Heart left ventricle (tissue), 16 donors: ENCODE measurements at regions of chr7 and their contacts with region 1.

Region 1: GRCh38 chr7:83976295-83976694 is 218.3 kb downstream of the SEMA3A start:
- DNase-seq: no peak
- ATAC-seq: peak in 1 of 4 donors; percentile 50
- H3K4me3 ChIP-seq: no peak overlapping the region
- H3K27ac ChIP-seq: no peak overlapping the region
- H3K4me1 ChIP-seq: no peaks in the 10 kb centered on the region
- H3K27me3 ChIP-seq: no peaks in the 10 kb centered on the region
- CTCF ChIP-seq: peak; percentile 46 to 84 (median 68)
- POLR2A ChIP-seq: no peak

Region 2: GRCh38 chr7:84100866-84101265 is 124.6 kb after region 1 on chr7:
- intact Hi-C with region 1: no loop called
- DNase-seq: no peak
- ATAC-seq: no peak
- H3K4me3 ChIP-seq: no peak overlapping the region
- H3K27ac ChIP-seq: no peak overlapping the region
- H3K4me1 ChIP-seq: no peaks in the 10 kb centered on the region
- H3K27me3 ChIP-seq: no peaks in the 10 kb centered on the region
- CTCF ChIP-seq: no peak
- POLR2A ChIP-seq: no peak

Region 3: GRCh38 chr7:84188786-84189405 is 212.6 kb after region 1 on chr7:
- intact Hi-C with region 1: loop called in 9 of 10 experiments (anchors 2 to 10 kb)
- DNase-seq: no peak
- ATAC-seq: peak in 2 of 4 donors; percentile 47 to 60
- H3K4me3 ChIP-seq: no peak overlapping the region
- H3K27ac ChIP-seq: no peak overlapping the region
- H3K4me1 ChIP-seq: peaks cover 0 to 7% (median 0%) of the 10 kb centered on the region in 12 donors
- H3K27me3 ChIP-seq: no peaks in the 10 kb centered on the region
- CTCF ChIP-seq: peak in 11 of 12 donors; percentile 15 to 62 (median 38)
- POLR2A ChIP-seq: no peak

Region 4: DNA sequence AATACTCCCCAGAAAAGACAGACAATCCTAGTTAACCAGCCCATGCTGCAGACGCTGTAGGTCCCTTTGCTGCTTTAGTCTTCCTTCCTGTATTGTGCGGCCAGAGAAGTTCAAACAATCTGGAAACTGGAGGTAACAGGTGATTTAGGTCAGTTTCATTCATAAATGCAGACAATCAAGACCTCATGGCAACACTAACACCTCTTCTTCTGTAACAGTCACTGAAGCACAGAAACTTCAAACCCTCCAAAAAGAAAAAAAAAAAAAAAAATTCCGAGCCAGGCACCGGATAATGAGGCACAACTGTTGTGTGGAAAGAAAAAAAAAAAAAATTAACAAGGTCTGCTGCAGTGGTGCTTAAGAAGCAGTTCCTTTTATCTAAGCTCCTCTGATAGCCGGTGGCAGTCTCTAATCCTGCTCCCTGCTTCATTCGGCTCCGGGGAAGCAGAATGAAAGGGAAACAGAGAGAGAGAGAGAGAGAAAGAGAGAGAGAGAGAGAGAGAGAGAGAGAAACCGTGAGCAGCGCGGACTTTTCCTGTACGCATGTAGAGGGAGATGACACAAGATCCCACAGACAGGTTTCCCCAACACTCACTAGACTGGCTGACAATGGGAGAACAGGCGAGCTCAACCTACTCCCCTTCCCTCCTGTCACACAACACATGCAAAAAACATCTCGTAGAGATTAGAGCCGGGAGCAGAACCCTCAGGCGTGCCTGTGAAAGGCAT is 218.4 kb after region 1 on chr7 and contains the start of gene SEMA3A:
- intact Hi-C with region 1: loop called in 9 of 10 experiments (anchors 2 to 10 kb)
- DNase-seq: peak in 2 of 5 donors; percentile 17 to 32
- ATAC-seq: peak; percentile 58 to 87 (median 76)
- H3K4me3 ChIP-seq: peak within 1 kb of the TSS; percentile 15 to 59 (median 49)
- H3K27ac ChIP-seq: peak within 1 kb of the TSS in 1 of 12 donors; percentile 79
- H3K4me1 ChIP-seq: peaks cover 0 to 16% (median 1%) of the 10 kb centered on the region in 12 donors
- H3K27me3 ChIP-seq: no peaks in the 10 kb centered on the region
- CTCF ChIP-seq: no peak
- POLR2A ChIP-seq: no peak
- total RNA-seq, gene SEMA3A: 0.32 to 6.6 (median 1.5) TPM

Region 5: DNA sequence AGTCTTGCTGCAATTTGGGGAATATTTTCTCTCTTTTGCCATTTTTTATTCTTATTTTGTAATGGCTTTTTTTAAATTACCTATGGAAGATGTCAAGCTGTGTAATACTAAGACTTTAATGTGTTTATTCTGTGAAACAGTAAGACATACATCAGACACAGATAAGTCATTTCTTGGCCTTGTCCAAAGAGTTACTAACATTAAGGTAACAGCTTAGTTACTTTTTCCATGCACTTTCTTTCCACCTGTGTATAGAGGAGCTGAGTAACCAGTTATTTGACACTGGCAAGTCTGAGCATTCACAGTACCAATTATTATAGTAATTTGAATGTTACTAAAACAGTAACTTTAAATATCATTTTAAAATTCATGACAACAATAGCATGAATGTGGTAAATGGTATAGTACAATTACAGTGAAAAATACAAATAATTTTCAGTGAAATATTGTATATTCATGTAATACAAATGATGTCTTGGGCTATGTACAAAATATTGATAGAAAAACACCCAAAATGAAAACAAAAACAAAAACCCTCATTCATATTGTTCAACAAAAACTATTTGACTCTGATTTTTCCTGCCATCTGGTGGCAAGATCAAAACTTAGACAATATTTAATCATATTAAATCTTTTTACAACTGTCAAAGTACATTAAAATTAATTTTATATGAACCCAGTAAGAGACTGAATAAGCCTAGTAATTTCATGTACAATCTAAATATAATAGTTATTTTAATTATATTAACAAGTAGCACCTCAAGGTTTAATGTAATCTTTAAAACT is 478.1 kb after region 1 on chr7:
- intact Hi-C with region 1: loop called in 1 of 10 experiments (anchors 5 kb)
- DNase-seq: no peak
- ATAC-seq: no peak
- H3K4me3 ChIP-seq: no peak overlapping the region
- H3K27ac ChIP-seq: no peak overlapping the region
- H3K4me1 ChIP-seq: no peaks in the 10 kb centered on the region
- H3K27me3 ChIP-seq: no peaks in the 10 kb centered on the region
- CTCF ChIP-seq: no peak
- POLR2A ChIP-seq: no peak

Region 6: DNA sequence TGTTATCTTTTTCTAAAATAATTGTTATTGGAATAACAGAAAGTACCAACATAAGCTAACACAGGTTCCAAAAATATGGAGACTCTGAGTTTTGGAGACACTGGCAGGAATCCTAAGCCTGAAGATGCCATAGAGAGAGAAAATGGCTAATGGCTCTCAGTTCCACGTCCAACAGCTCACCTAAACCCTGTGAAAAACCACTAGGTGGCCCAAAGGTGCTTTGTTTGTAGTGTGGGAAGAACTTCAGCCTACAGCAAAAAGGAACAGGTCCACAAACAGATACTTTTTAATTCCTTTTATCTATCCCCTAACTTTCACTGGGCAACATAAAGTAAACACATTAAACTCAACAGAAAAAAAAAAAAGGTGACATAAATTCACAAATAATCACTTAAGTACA is 938.3 kb after region 1 on chr7:
- intact Hi-C with region 1: loop called in 1 of 10 experiments (anchors 10 kb)
- DNase-seq: no peak
- ATAC-seq: no peak
- H3K4me3 ChIP-seq: no peak overlapping the region
- H3K27ac ChIP-seq: no peak overlapping the region
- H3K4me1 ChIP-seq: no peaks in the 10 kb centered on the region
- H3K27me3 ChIP-seq: no peaks in the 10 kb centered on the region
- CTCF ChIP-seq: peak in 2 of 12 donors; percentile 3 to 25
- POLR2A ChIP-seq: no peak

Region 7: DNA sequence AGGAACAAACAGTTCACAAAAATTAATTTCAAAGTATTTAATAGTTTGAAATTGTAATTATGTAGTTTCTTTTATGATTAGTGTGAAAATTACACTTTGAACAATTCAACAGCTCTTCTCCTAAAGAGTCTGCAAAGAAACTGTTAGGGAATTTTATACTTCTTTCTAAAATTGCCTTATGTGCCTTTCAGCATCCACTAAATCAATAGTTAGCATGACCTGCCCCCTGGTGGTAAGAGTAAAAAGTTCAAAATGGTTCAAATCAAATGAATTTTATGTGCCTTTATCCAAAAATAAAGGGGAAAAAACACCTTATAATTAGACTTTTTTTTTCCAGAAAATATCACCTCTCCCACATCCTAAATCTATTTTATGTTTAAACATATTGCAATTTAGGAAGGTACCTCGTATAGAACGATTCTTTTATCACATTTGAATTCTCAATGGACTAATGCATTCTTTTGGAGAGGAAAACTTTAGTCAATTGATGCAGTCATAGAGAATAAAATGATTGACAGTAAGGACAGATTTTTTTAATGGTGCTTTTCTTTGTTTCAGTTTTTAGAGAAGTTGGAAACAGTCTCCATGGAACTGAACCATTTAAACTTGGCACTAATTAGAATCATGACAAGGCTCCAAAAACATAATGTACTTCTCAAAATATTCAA is 1046.9 kb after region 1 on chr7:
- intact Hi-C with region 1: loop called (anchors 1 to 5 kb)
- DNase-seq: peak in 1 of 5 donors; percentile 20
- ATAC-seq: no peak
- H3K4me3 ChIP-seq: no peak overlapping the region
- H3K27ac ChIP-seq: no peak overlapping the region
- H3K4me1 ChIP-seq: peaks cover 0 to 5% (median 0%) of the 10 kb centered on the region in 12 donors
- H3K27me3 ChIP-seq: no peaks in the 10 kb centered on the region
- CTCF ChIP-seq: peak; percentile 57 to 80 (median 70)
- POLR2A ChIP-seq: no peak